Left cardiac atrium (tissue), 4 donors: ENCODE measurements at regions of chr12 and their contacts with region 1.

Region 1: DNA sequence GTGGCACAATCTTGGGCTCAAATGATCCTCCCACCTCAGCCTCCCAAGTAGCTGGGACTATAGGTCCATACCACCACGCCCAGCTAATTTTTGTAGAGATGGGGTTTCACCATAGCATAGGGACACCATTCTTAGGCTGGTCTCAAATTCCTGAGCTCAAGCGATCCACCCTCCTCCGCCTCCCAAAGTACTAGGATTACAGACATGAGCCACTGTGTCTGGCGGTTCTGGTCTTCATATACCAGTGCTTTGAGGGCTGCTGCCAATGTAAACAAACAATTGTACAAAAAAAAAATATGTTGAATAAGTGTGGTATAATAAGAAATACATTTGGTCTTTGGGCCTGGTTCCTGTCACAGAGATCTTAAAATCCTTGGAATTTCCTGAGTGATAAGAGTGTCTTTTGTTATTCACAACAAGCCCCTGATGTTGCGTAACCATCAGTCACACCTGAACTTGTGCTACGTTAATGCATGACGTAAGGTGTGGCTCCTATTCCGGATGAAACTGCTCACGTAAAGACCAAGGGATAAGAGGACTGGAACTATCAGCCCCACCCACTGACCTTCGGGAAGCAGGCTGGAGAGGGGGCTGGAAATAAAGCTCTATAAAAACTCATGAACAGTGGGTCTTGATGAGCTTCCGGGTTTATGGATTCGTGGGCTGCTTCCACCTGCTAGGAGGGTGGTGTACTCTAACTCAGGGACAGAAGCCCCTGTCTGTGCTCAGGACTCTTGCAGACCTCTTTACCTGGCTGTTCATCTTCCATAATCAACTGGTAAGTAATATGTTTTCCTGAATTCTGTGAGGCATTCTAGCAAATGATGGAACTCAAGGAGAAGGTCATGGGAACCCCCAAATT is 16.5 kb upstream of the RIMKLB start:
- DNase-seq: no peak
- ATAC-seq: peak; percentile 33 to 72

Region 2: DNA sequence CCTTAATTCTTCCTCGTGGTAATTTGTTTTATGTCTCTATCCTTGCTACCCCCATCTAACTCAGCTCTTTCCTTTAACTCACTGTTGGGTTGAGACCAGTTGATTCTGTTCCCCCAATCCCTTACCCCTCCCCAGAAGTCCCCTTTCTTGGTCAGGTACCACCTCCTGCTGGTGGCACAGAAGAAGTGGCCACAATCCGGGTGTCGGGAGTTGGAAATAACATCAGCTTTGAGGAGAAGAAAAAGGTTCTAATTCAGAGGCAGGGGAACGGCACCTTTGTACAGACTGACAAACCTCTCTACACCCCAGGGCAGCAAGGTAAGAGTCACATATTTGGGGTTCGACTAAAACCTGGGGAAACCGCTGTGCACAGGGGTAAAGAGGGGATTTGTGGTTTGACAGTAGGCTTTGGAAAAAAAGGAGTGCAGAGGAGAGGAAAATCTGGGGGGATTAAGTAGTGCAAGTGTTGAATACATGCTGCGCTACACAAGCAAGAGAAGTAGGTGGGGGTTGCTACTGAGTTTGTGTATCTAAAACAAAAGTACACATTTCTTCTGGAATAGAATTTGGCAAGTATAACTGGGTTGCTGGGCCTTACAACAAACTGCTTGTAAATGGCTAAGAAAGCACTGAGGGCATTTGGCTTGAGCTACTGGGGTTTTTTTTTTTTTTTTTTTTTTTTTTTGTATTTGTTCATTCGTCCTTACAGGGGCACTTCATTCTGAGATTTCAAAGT is 142.5 kb after region 1 on chr12:
- intact Hi-C with region 1: loop called in 1 of 2 experiments (anchors 5 kb)
- DNase-seq: no peak
- ATAC-seq: peak; percentile 43 to 76